Naive thymus-derived CD4-positive, alpha-beta T cell (primary cell): ENCODE measurements at regions of chr10 and their contacts with region 1.

Region 1: GRCh38 chr10:123160311-123160980 is 6.2 kb downstream of the BUB3 start:
- DNase-seq: peak in 7 of 9 donors; percentile 49 to 80 (median 73)
- ATAC-seq: peak; percentile 93
- H3K4me3 ChIP-seq: peak overlapping the region; percentile 25
- H3K4me3 Mint-ChIP-seq: peak overlapping the region; percentile 59 to 93 (median 71)
- H3K27ac ChIP-seq: peak overlapping the region; percentile 46
- H3K27ac Mint-ChIP-seq: peak overlapping the region; percentile 73 to 90 (median 78)
- H3K4me1 ChIP-seq: peaks cover 40 to 58% of the 10 kb centered on the region in 2 donors
- H3K4me1 Mint-ChIP-seq: peaks cover 33 to 87% (median 78%) of the 10 kb centered on the region in 7 donors
- H3K27me3 ChIP-seq: no peaks in the 10 kb centered on the region
- H3K27me3 Mint-ChIP-seq: no peaks in the 10 kb centered on the region

Region 2: GRCh38 chr10:122232769-122233168 is 927.7 kb before region 1 on chr10:
- CTCF ChIA-PET with region 1: no interaction called
- POLR2A ChIA-PET with region 1: no interaction called
- intact Hi-C with region 1: no loop called
- DNase-seq: no peak
- ATAC-seq: no peak
- H3K4me3 ChIP-seq: no peak overlapping the region
- H3K4me3 Mint-ChIP-seq: no peak overlapping the region
- H3K27ac ChIP-seq: no peak overlapping the region
- H3K27ac Mint-ChIP-seq: no peak overlapping the region
- H3K4me1 ChIP-seq: no peaks in the 10 kb centered on the region
- H3K4me1 Mint-ChIP-seq: peaks cover 0 to 1% (median 0%) of the 10 kb centered on the region in 7 donors
- H3K27me3 ChIP-seq: no peaks in the 10 kb centered on the region
- H3K27me3 Mint-ChIP-seq: peaks cover 0 to 19% (median 8%) of the 10 kb centered on the region in 5 donors

Region 3: GRCh38 chr10:122618461-122619165 is 541.8 kb before region 1 on chr10:
- CTCF ChIA-PET with region 1: no interaction called
- POLR2A ChIA-PET with region 1: no interaction called
- intact Hi-C with region 1: no loop called
- DNase-seq: no peak
- ATAC-seq: no peak
- H3K4me3 ChIP-seq: no peak overlapping the region
- H3K4me3 Mint-ChIP-seq: no peak overlapping the region
- H3K27ac ChIP-seq: no peak overlapping the region
- H3K27ac Mint-ChIP-seq: no peak overlapping the region
- H3K4me1 ChIP-seq: no peaks in the 10 kb centered on the region
- H3K4me1 Mint-ChIP-seq: no peaks in the 10 kb centered on the region
- H3K27me3 ChIP-seq: no peaks in the 10 kb centered on the region
- H3K27me3 Mint-ChIP-seq: peaks cover 0 to 12% (median 3%) of the 10 kb centered on the region in 5 donors

Region 4: DNA sequence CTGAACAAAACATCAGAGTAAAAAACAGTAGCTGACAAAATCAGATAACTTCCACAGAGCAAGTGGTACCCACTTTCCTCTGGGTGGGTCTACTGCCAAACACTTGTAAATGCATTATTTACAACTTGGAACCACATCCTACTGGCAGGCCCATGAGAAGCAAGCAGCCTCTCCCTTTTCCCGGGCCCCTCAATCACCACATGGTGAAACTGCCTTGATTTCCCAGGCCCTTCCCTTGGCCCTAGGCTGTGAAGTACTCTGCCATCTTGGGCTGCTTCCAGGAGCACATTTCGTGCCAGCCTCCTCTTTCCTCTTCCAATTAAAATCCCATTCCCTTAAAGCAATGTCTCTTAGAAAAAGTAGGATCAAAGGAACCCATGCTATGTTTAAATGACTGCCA is 386.2 kb before region 1 on chr10:
- CTCF ChIA-PET with region 1: no interaction called
- POLR2A ChIA-PET with region 1: no interaction called
- intact Hi-C with region 1: no loop called
- DNase-seq: no peak
- ATAC-seq: no peak
- H3K4me3 ChIP-seq: no peak overlapping the region
- H3K4me3 Mint-ChIP-seq: no peak overlapping the region
- H3K27ac ChIP-seq: no peak overlapping the region
- H3K27ac Mint-ChIP-seq: no peak overlapping the region
- H3K4me1 ChIP-seq: no peaks in the 10 kb centered on the region
- H3K4me1 Mint-ChIP-seq: no peaks in the 10 kb centered on the region
- H3K27me3 ChIP-seq: no peaks in the 10 kb centered on the region
- H3K27me3 Mint-ChIP-seq: peaks cover 0 to 44% (median 27%) of the 10 kb centered on the region in 5 donors

Region 5: DNA sequence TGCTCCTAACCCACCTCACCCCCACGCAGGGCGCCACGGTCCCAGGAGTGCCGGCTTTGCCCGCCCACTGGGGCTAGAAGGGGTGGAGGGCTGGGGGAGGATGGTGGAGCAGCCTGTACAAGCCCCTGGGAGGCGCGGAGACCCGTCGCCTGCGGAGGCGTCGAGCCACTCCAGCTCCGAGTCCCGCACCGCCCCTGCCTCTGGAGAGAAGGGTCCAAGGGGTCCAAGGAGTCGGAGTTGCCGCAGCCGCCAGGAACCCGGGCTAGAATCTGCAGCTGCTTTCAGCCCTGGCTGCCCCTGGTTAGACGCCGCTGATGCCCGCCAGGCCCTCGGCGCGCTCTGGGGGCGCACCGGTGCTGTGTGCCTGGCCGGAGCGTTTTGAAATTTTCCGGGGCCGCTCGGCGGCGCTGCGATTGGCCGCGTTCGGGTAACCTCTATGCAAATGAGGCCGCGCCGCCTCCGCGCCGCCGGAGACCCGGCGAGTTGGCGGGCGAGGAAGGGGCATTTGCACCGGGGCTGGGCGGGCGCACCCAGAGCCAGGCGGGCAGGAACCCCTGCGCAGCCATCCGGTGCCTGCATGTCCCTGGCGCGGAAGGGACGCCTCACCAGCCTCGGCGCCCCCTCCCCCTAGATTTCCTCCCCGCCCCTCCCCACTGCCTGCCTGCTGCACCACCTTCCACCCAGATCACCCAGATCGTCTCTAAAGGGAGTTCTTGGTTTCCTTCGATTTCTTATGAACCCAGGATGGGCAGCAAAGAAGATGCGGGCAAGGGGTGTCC is 12.6 kb before region 1 on chr10 and contains the start of gene HMX2:
- CTCF ChIA-PET with region 1: interaction called, 4 read pairs
- POLR2A ChIA-PET with region 1: interaction called, 16 read pairs
- intact Hi-C with region 1: no loop called
- DNase-seq: peak in 2 of 9 donors; percentile 37 to 40
- ATAC-seq: peak; percentile 30
- H3K4me3 ChIP-seq: peak within 1 kb of the TSS; percentile 52
- H3K4me3 Mint-ChIP-seq: peak within 1 kb of the TSS; percentile 62 to 91 (median 89)
- H3K27ac ChIP-seq: no peak within 1 kb of the TSS
- H3K27ac Mint-ChIP-seq: peak within 1 kb of the TSS in 5 of 9 donors; percentile 15 to 66 (median 43)
- H3K4me1 ChIP-seq: peaks cover 33 to 79% of the 10 kb centered on the region in 2 donors
- H3K4me1 Mint-ChIP-seq: peaks cover 25 to 77% (median 62%) of the 10 kb centered on the region in 7 donors
- H3K27me3 ChIP-seq: peaks cover 25 to 48% of the 10 kb centered on the region in 2 donors
- H3K27me3 Mint-ChIP-seq: peaks cover 50 to 82% (median 54%) of the 10 kb centered on the region in 5 donors
- total RNA-seq, gene HMX2: not detected

Region 6: DNA sequence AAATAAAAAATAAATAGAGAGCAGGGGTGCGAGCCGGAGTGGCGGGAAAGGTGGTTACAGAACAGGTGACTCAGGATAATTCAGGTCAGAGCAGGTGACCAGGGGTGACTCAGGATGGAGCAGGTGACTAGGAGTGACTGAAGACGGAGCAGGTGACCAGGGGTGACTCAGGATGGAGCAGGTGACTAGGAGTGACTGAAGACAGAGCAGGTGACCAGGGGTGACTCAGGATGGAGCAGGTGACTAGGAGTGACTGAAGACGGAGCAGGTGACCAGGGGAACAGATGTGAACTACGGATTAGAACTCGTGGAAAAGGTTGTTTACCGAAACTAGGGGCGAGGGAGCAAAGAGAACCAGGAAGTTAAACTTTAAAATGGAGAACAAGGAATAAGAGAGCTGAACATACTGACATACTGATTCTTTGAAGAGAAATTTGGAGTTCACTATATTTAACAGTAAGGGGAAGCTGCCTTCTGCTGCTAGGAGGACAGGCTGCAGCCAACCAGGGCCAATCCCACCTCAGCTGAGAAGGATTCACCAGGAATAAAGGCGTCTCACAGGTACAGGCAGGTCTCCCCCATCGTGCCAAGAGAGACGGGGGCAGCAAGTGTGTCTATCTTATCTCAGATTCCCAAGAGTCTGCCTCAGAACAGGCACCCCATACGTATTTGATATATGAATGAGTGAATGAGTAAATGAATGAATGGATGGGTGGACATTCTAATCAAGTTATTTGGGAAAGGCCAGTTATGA is 629.9 kb after region 1 on chr10:
- CTCF ChIA-PET with region 1: no interaction called
- POLR2A ChIA-PET with region 1: no interaction called
- intact Hi-C with region 1: no loop called
- DNase-seq: no peak
- ATAC-seq: no peak
- H3K4me3 ChIP-seq: no peak overlapping the region
- H3K4me3 Mint-ChIP-seq: no peak overlapping the region
- H3K27ac ChIP-seq: no peak overlapping the region
- H3K27ac Mint-ChIP-seq: no peak overlapping the region
- H3K4me1 ChIP-seq: no peaks in the 10 kb centered on the region
- H3K4me1 Mint-ChIP-seq: no peaks in the 10 kb centered on the region
- H3K27me3 ChIP-seq: no peaks in the 10 kb centered on the region
- H3K27me3 Mint-ChIP-seq: peaks cover 0 to 41% (median 17%) of the 10 kb centered on the region in 5 donors